A673 (cell line): ENCODE measurements at regions of chr7 and their contacts with region 1.

Region 1: GRCh38 chr7:31122649-31123058 is 70.5 kb downstream of the ADCYAP1R1 start:
- DNase-seq: peak; percentile 85
- H3K4me3 ChIP-seq: no peak overlapping the region
- H3K27ac ChIP-seq: no peak overlapping the region
- H3K4me1 ChIP-seq: no peaks in the 10 kb centered on the region
- H3K27me3 ChIP-seq: peaks cover 10% of the 10 kb centered on the region
- CTCF ChIP-seq: peak; percentile 89

Region 2: DNA sequence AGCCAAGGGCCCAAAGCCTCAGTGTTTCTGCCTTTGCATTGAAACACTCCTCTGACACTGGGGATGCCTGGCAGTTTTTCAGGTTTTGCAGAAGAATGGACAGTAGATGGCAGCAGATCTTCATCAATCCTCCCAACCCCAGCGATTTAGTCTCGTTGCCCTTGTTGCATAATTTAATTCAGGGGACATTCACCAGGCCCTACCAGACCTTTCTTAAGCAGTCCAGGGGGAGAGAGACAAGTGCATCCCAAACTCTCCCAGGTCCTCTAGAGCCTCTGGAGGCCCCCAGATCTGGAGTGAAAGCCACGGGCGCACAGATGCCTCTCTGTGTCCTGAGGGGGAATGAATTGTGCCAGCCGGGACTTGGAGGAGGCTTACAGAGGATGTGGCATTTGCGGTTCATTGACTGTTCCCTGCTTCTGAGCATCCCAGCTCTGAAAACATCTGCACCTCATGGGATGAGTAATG is 321.8 kb before region 1 on chr7:
- CTCF ChIA-PET with region 1: interaction called, 7 read pairs
- POLR2A ChIA-PET with region 1: no interaction called
- intact Hi-C with region 1: loop called (anchors 1 kb)
- DNase-seq: peak; percentile 80
- H3K4me3 ChIP-seq: no peak overlapping the region
- H3K27ac ChIP-seq: no peak overlapping the region
- H3K4me1 ChIP-seq: peaks cover 18% of the 10 kb centered on the region
- H3K27me3 ChIP-seq: no peaks in the 10 kb centered on the region
- CTCF ChIP-seq: peak; percentile 71

Region 3: DNA sequence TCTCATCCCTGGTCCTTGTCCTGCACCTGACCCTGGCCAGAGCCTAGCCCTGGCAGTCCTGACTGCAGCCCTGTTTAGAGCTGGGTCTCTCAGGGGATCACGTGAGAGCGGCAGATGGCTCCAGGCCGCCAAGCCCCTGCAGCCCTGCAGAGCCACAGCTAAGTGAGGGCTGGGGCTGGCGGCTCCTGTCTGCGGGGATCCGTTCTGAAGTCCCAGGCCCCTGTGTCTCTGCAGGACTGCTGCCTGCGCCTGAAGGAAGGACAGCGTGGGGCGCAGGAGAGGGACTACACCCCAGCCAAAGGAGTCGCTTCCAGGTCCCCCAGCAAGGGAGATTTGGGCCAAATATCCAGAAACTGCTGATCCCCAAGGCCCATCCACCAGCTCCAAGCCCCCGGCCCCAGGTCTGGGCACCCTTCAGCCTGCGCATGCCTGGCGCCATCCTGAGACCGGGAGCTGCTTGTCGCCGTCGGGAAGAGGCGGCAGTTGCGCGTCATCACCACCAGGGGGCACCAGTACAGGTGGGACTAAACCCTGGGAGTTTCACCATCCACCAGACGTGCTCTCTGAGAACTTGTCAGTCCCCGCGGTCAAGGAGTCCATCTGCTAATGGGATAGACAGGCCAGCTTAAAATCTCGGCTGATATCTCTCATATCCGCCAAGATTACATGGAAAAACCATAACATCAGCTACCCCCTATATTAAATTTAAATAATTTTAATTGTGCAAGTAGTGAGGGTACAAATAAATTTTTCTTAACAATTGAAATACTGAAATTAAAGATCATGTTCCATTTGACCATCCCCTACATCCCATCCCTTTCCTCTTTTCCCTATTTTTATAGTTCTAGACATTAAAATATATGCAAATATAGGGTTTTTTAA is 184.0 kb before region 1 on chr7:
- CTCF ChIA-PET with region 1: interaction called, 13 read pairs
- POLR2A ChIA-PET with region 1: no interaction called
- intact Hi-C with region 1: no loop called
- DNase-seq: peak; percentile 74
- H3K4me3 ChIP-seq: no peak overlapping the region
- H3K27ac ChIP-seq: no peak overlapping the region
- H3K4me1 ChIP-seq: peaks cover 7% of the 10 kb centered on the region
- H3K27me3 ChIP-seq: peaks cover 35% of the 10 kb centered on the region
- CTCF ChIP-seq: peak; percentile 94

Region 4: DNA sequence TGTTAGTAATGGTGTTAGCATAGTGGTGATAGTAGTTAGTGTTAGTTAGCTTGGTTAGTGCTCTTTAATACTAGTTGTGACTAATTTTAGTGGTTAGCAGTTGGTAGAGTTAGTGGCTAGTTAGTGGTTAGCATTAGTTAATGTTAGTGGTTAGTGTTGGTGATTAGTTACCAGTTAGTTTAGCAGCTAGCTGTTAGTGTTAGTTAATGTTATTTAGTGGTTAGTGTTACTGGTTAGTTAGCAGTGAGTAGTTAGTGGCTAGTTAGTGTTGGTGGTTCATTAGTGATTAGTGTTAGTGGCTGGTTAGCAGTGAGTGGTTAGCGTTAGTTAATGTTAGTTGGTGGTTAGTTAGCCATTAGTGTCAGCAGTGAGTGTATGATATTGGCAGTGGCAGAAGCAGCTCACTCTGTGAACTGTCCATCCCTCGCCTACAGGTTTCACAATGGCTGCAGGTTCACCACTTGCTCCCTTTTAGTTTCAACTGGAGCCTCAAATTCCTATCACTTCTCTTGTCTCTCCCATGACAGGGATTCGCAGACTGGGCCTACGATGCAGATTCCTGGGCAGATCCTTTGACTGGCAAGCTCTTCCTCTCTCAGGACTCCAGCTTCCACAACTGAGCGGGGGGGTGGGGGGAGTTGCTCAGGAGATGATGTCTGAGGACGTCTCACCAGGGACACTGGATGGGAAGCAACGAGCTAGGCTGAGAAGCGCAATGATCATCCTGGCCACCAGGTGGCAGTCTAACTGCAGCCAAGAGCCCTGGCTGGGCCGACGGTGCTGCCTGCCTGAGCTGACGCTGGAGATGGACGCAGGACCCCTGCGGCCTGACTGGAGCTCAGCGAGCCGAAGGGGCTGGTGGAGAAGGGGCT is 139.4 kb before region 1 on chr7:
- CTCF ChIA-PET with region 1: interaction called, 138 read pairs
- POLR2A ChIA-PET with region 1: no interaction called
- intact Hi-C with region 1: loop called (anchors 1 kb)
- DNase-seq: peak; percentile 85
- H3K4me3 ChIP-seq: no peak overlapping the region
- H3K27ac ChIP-seq: no peak overlapping the region
- H3K4me1 ChIP-seq: no peaks in the 10 kb centered on the region
- H3K27me3 ChIP-seq: no peaks in the 10 kb centered on the region
- CTCF ChIP-seq: peak; percentile 93

Region 5: GRCh38 chr7:31134246-31135188 is 11.9 kb after region 1 on chr7:
- CTCF ChIA-PET with region 1: interaction called, 11 read pairs
- POLR2A ChIA-PET with region 1: no interaction called
- intact Hi-C with region 1: no loop called
- DNase-seq: peak; percentile 91
- H3K4me3 ChIP-seq: no peak overlapping the region
- H3K27ac ChIP-seq: no peak overlapping the region
- H3K4me1 ChIP-seq: no peaks in the 10 kb centered on the region
- H3K27me3 ChIP-seq: no peaks in the 10 kb centered on the region
- CTCF ChIP-seq: peak; percentile 75

Region 6: DNA sequence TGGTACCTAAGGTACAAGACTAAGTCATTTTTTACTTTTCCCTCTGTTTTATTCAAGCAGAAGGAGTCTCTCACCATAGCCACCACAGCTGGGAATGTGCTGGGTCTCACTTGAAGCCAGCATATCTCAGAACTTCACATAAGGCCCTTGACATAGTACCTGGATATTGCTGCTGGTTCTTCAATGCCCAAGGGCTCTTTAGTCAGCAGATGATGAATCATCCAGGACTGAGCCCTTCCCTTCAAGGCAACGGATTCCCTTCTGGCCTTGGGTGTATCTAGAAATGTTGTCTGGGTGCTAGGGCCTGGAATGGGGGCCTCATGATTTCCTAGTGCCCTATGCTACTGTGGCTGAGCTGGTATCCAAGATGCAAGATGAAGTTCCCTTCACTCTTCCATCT is 23.4 kb after region 1 on chr7:
- CTCF ChIA-PET with region 1: no interaction called
- POLR2A ChIA-PET with region 1: no interaction called
- intact Hi-C with region 1: no loop called
- DNase-seq: no peak
- H3K4me3 ChIP-seq: no peak overlapping the region
- H3K27ac ChIP-seq: no peak overlapping the region
- H3K4me1 ChIP-seq: no peaks in the 10 kb centered on the region
- H3K27me3 ChIP-seq: no peaks in the 10 kb centered on the region
- CTCF ChIP-seq: no peak